ENCODE measurements at regions of chr9 and their contacts with region 1.

Region 1: GRCh38 chr9:89461265-89461664 is 36.6 kb downstream of the SEMA4D start:
- DNase-seq: no peak
- ATAC-seq: no peak
- H3K4me3 ChIP-seq: no peak overlapping the region
- H3K27ac ChIP-seq: no peak overlapping the region
- H3K4me1 ChIP-seq: peaks cover 58% of the 10 kb centered on the region
- H3K27me3 ChIP-seq: no peaks in the 10 kb centered on the region
- CTCF ChIP-seq: no peak
- EP300 ChIP-seq: no peak
- POLR2A ChIP-seq: no peak
- RAD21 ChIP-seq: no peak

Region 2: DNA sequence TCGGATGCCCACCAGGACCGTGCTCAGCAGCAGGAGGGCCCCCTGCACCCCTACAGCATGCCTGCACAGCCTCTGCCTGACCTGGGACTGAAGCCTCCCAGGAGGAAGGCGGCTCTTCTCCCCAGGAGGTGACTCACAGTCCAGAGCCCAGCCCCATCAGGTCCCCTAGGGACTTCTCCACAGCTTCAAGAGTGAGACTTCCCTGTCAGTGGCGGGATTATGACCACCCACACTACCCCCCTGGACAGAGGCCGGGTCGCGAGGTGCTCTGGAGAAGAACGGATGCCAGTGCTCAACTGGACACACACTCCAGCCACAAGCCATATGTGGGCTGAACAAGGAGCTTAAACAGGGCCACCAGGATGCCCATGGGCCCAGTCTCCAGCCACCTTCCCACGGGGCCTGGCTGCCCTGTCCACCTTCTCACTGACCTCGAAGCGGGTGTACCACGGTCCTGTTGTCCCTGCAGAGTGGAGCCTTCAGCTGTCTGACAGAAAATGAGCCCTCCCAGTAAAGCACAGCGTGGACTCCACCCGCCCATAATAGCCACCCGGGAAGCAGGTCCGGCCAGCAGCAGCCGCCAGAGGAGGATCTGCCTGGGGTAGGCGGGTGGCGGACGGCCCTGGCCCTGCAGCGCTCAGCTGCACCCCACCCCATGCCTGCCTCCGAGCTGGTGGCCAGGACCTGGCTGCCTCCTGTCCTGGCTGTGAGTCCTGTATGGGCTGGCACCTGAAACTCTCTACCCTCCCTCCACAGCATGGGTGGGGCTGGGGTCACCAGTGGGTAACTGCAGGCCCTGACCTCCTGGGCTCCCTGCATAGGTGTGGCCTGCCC is 18.1 kb before region 1 on chr9:
- CTCF ChIA-PET with region 1: no interaction called
- POLR2A ChIA-PET with region 1: interaction called, 7 read pairs
- RAD21 ChIA-PET with region 1: interaction called, 16 read pairs
- SMC1A ChIA-PET with region 1: interaction called, 17 read pairs
- in situ Hi-C with region 1: no loop called
- intact Hi-C with region 1: no loop called
- DNase-seq: no peak
- ATAC-seq: peak; percentile 77
- H3K4me3 ChIP-seq: peak overlapping the region; percentile 3; the same call in 1 of the 2 replicates
- H3K27ac ChIP-seq: peak overlapping the region; percentile 63
- H3K4me1 ChIP-seq: peaks cover 51% of the 10 kb centered on the region
- H3K27me3 ChIP-seq: no peaks in the 10 kb centered on the region
- CTCF ChIP-seq: no peak
- EP300 ChIP-seq: no peak
- POLR2A ChIP-seq: no peak; the same call in 1 of the 2 replicates
- RAD21 ChIP-seq: no peak

Region 3: DNA sequence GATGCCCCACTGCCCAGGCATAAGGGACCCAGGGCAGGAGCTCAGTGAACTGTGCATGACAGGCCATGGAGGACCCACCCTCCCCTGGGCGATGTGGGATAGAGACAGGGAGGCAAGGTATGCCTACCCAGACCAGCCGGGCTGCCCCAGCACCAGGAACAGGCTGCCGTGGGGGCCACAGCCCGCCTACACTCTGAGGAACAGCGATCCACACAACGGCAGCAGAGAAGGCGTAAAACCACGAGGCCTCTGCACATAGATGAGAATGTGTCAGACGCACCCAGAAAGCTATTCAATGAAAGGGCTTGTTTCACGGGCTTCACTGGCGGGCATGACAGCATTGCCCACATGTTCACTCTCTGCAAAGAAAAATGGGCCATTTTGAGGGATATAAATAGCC is 12.9 kb before region 1 on chr9:
- CTCF ChIA-PET with region 1: interaction called, 4 read pairs
- POLR2A ChIA-PET with region 1: interaction called, 7 read pairs
- RAD21 ChIA-PET with region 1: interaction called, 12 read pairs
- SMC1A ChIA-PET with region 1: interaction called, 17 read pairs
- in situ Hi-C with region 1: no loop called
- intact Hi-C with region 1: no loop called
- DNase-seq: no peak
- ATAC-seq: peak; percentile 71
- H3K4me3 ChIP-seq: no peak overlapping the region
- H3K27ac ChIP-seq: no peak overlapping the region; the same call in 1 of the 2 replicates
- H3K4me1 ChIP-seq: peaks cover 20% of the 10 kb centered on the region
- H3K27me3 ChIP-seq: no peaks in the 10 kb centered on the region
- CTCF ChIP-seq: no peak
- EP300 ChIP-seq: no peak
- POLR2A ChIP-seq: peak; percentile 10; the same call in 1 of the 2 replicates
- RAD21 ChIP-seq: no peak

Region 4: GRCh38 chr9:89497978-89498851 is 37.0 kb after region 1 on chr9 and contains the start of gene SEMA4D:
- CTCF ChIA-PET with region 1: no interaction called
- POLR2A ChIA-PET with region 1: interaction called, 5 read pairs
- RAD21 ChIA-PET with region 1: interaction called, 3 read pairs
- SMC1A ChIA-PET with region 1: interaction called, 5 read pairs
- in situ Hi-C with region 1: no loop called
- intact Hi-C with region 1: loop called (anchors 5 kb)
- DNase-seq: no peak
- ATAC-seq: peak; percentile 44
- H3K4me3 ChIP-seq: peak within 1 kb of the TSS; percentile 99
- H3K27ac ChIP-seq: peak within 1 kb of the TSS; percentile 72
- H3K4me1 ChIP-seq: peaks cover 37% of the 10 kb centered on the region
- H3K27me3 ChIP-seq: no peaks in the 10 kb centered on the region
- CTCF ChIP-seq: no peak
- EP300 ChIP-seq: no peak
- POLR2A ChIP-seq: peak; percentile 57; the same call in 1 of the 2 replicates
- RAD21 ChIP-seq: no peak
- polyA plus RNA-seq, gene SEMA4D: 15.1 to 22.7 TPM

Region 5: GRCh38 chr9:89952401-89952800 is 491.1 kb after region 1 on chr9:
- CTCF ChIA-PET with region 1: no interaction called
- POLR2A ChIA-PET with region 1: no interaction called
- RAD21 ChIA-PET with region 1: no interaction called
- SMC1A ChIA-PET with region 1: no interaction called
- in situ Hi-C with region 1: no loop called
- intact Hi-C with region 1: no loop called
- DNase-seq: no peak
- ATAC-seq: peak; percentile 46
- H3K4me3 ChIP-seq: no peak overlapping the region
- H3K27ac ChIP-seq: no peak overlapping the region
- H3K4me1 ChIP-seq: no peaks in the 10 kb centered on the region
- H3K27me3 ChIP-seq: no peaks in the 10 kb centered on the region
- CTCF ChIP-seq: no peak
- EP300 ChIP-seq: no peak; a peak in 2 of 4 replicates
- POLR2A ChIP-seq: no peak
- RAD21 ChIP-seq: no peak